Activated B cell treated with CpG ODN at 0.5 μM for 24 hours (primary cell): ENCODE measurements at regions of chr14 and their contacts with region 1.

Region 1: GRCh38 chr14:65302571-65303189 is 109.8 kb upstream of the FUT8 start:
- DNase-seq: no peak
- ATAC-seq: peak; percentile 40
- H3K4me3 Mint-ChIP-seq: peak overlapping the region; percentile 48
- H3K27ac Mint-ChIP-seq: peak overlapping the region; percentile 96
- H3K4me1 Mint-ChIP-seq: peaks cover 79% of the 10 kb centered on the region
- H3K27me3 Mint-ChIP-seq: no peaks in the 10 kb centered on the region
- CTCF ChIP-seq: no peak

Region 2: GRCh38 chr14:64681796-64682710 is 620.6 kb before region 1 on chr14:
- CTCF ChIA-PET with region 1: no interaction called
- POLR2A ChIA-PET with region 1: no interaction called
- intact Hi-C with region 1: no loop called
- DNase-seq: no peak
- ATAC-seq: no peak
- H3K4me3 Mint-ChIP-seq: no peak overlapping the region
- H3K27ac Mint-ChIP-seq: no peak overlapping the region
- H3K4me1 Mint-ChIP-seq: no peaks in the 10 kb centered on the region
- H3K27me3 Mint-ChIP-seq: no peaks in the 10 kb centered on the region
- CTCF ChIP-seq: no peak

Region 3: DNA sequence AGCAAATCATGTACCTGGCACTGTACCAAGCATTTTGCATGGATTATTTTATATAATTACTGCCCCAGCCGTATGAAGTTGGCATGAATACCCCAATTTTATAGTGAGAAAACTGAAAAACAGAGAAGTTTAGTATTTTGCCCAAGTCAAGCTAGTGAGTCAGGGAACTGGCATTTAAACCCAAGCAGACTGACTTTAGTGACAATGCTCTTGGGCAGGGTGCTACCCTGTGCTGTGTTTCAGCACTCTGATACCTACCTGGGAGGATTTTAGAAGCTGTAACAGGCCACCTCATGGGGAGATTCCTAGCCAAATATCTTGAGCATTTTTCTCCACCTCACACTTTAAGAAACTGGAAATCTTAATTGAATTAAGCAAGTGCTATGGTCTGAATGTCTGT is 102.2 kb before region 1 on chr14:
- CTCF ChIA-PET with region 1: no interaction called
- POLR2A ChIA-PET with region 1: interaction called, 22 read pairs
- intact Hi-C with region 1: loop called (anchors 1 kb)
- DNase-seq: no peak
- ATAC-seq: no peak
- H3K4me3 Mint-ChIP-seq: no peak overlapping the region
- H3K27ac Mint-ChIP-seq: no peak overlapping the region
- H3K4me1 Mint-ChIP-seq: peaks cover 66% of the 10 kb centered on the region
- H3K27me3 Mint-ChIP-seq: no peaks in the 10 kb centered on the region
- CTCF ChIP-seq: no peak

Region 4: DNA sequence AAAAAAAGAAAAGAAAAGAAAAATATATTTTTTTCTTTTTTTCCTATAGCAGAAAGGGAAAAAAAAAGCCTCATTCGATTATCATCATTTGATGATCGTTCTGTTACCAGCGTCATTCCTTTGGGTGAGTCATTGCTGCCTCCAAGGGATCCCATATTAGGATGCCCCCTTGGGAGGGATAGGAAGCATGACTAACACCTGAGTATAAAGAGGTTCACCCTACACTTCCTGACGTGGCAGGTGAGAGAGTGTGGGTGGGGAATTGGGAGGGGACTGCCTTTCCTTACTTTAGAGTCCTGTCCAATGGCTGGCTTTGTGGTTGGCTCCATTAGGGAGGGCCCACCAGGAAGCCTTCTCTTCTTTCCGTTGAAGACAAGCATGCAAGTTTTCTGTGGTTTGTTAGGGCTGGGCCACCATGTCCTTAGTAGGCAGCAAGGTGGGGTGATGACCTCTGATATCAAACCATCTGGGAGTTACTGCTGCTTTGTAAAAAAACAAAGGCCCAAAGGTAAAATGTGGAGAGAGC is 53.7 kb after region 1 on chr14:
- CTCF ChIA-PET with region 1: interaction called, 3 read pairs
- POLR2A ChIA-PET with region 1: interaction called, 8 read pairs
- intact Hi-C with region 1: loop called (anchors 5 kb)
- DNase-seq: no peak
- ATAC-seq: no peak
- H3K4me3 Mint-ChIP-seq: no peak overlapping the region
- H3K27ac Mint-ChIP-seq: peak overlapping the region; percentile 71
- H3K4me1 Mint-ChIP-seq: peaks cover 87% of the 10 kb centered on the region
- H3K27me3 Mint-ChIP-seq: no peaks in the 10 kb centered on the region
- CTCF ChIP-seq: no peak

Region 5: GRCh38 chr14:65396082-65396910 is 93.6 kb after region 1 on chr14:
- CTCF ChIA-PET with region 1: no interaction called
- POLR2A ChIA-PET with region 1: interaction called, 13 read pairs
- intact Hi-C with region 1: loop called (anchors 5 kb)
- DNase-seq: no peak
- ATAC-seq: peak; percentile 79
- H3K4me3 Mint-ChIP-seq: peak overlapping the region; percentile 58
- H3K27ac Mint-ChIP-seq: peak overlapping the region; percentile 82
- H3K4me1 Mint-ChIP-seq: peaks cover 32% of the 10 kb centered on the region
- H3K27me3 Mint-ChIP-seq: no peaks in the 10 kb centered on the region
- CTCF ChIP-seq: no peak

Region 6: DNA sequence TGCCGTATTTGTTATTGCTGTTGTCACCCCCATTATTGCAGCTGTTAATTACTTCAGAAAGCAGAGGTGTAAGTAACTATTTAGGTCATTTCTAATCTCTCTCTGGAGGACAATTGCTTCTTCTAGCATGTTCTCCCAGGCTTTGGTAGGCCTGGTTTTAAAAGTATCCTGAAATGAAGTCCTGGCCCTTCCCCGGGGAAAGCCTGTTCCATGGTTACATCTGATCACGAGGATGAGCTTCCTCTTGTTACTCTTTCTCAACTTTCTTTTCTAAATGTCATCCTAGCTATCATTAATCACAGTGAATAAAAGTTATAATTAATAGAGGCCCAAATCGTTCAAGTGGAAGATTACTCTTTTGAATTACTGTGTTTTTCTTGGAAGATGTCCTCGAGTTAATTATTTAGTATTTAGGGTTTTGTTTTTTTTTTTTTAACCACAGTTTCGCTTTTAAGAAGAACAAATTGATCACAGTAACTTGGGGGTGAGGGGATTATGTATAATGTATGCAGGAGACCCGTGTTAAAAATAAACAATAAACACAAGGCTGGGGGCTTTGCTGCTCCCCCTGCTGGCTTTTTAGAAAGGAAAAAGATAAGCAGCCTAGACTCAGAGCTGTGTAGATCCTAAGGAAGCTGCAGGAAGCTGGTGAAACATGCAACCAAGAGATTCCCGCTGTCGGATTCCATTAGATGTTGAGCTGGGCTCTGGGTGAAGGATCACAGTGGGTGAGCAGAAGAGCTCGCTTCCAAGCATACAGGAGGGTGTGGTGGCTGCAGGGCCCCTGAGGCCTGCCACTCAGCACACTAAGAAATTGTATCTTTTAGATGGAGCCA is 530.0 kb after region 1 on chr14:
- CTCF ChIA-PET with region 1: no interaction called
- POLR2A ChIA-PET with region 1: no interaction called
- intact Hi-C with region 1: no loop called
- DNase-seq: no peak
- ATAC-seq: no peak
- H3K4me3 Mint-ChIP-seq: no peak overlapping the region
- H3K27ac Mint-ChIP-seq: no peak overlapping the region
- H3K4me1 Mint-ChIP-seq: no peaks in the 10 kb centered on the region
- H3K27me3 Mint-ChIP-seq: peaks cover 6% of the 10 kb centered on the region
- CTCF ChIP-seq: no peak